Activated naive CD4-positive, alpha-beta T cell treated with anti-CD3 and anti-CD28 coated beads for 36 hours (primary cell): ENCODE measurements at regions of chr3 and their contacts with region 1.

Region 1: GRCh38 chr3:172341482-172342059 is 106.7 kb downstream of the GHSR start:
- DNase-seq: peak; percentile 14
- H3K4me3 Mint-ChIP-seq: no peak overlapping the region
- H3K27ac Mint-ChIP-seq: no peak overlapping the region
- H3K4me1 Mint-ChIP-seq: no peaks in the 10 kb centered on the region
- H3K27me3 Mint-ChIP-seq: no peaks in the 10 kb centered on the region

Region 2: DNA sequence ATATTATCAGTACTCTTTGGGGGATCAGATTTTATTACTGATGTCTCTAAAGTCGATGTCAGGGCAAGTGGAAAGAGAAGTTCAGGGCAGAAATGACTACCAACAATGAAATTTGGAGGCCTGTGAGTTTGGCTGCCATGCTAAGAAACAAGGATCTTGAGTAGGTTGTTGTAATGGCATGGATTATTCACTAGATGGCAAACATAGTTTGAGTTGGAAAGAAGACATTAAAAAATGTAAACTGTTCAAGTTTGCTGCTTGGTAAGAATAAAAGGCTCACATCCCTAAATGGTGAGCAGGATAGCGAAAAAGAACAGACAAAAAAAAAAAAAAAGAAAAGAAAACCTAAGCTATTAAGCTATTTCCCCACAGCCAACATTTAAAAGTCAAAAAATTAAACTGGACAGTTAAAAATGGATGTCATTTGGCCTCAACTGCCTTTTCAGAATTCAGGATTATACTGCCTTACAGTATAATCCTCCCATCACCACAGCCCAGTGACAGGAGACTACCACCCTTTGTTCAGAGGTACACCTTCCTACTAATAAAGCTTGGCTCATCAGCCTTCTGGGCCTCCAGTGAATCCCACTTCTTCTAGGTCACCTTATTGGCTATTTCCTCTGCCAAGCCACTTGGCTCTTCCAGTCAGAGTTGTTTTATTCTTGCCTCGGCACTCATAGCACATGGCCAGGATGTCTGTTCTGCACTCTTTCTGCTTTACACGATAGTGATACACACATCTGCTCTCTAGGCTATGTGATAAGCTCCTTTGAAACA is 695.0 kb before region 1 on chr3:
- CTCF ChIA-PET with region 1: no interaction called
- intact Hi-C with region 1: loop called (anchors 1 kb)
- DNase-seq: no peak
- H3K4me3 Mint-ChIP-seq: no peak overlapping the region
- H3K27ac Mint-ChIP-seq: no peak overlapping the region
- H3K4me1 Mint-ChIP-seq: no peaks in the 10 kb centered on the region
- H3K27me3 Mint-ChIP-seq: no peaks in the 10 kb centered on the region

Region 3: DNA sequence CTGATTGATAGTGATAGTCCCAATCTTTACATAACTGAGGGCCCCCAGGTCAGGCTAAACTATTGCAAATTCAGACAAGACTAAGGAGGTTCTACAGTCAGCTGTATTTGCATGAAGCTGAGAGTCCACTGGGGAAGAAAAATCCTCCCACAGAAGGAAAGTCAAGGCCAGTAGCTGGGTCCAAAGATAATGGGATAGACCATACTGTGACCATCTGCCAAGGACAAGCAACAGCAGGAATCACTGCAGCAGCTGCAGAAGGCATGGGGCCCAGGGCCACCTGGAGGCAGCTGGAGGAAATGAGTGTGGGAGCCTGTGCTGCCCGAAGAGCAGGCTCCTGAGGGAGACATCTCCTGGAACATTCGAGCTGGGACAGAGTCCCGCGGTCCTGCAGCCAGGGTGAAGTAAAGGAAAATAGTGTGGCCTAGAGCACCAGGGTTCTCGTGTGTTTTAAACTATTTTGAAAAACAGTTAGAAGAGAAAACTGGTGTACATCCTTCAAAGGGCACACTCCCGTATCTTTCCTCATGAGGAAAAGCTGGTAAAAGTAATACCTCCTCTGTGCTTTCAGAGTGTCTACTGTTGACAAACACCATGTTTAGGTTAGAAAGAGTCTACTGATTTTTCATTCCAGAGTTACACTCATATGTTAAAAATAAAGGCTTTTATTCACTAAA is 511.6 kb before region 1 on chr3:
- CTCF ChIA-PET with region 1: interaction called, 5 read pairs
- intact Hi-C with region 1: loop called (anchors 2 kb)
- DNase-seq: no peak
- H3K4me3 Mint-ChIP-seq: no peak overlapping the region
- H3K27ac Mint-ChIP-seq: no peak overlapping the region
- H3K4me1 Mint-ChIP-seq: no peaks in the 10 kb centered on the region
- H3K27me3 Mint-ChIP-seq: peaks cover 12% of the 10 kb centered on the region

Region 4: DNA sequence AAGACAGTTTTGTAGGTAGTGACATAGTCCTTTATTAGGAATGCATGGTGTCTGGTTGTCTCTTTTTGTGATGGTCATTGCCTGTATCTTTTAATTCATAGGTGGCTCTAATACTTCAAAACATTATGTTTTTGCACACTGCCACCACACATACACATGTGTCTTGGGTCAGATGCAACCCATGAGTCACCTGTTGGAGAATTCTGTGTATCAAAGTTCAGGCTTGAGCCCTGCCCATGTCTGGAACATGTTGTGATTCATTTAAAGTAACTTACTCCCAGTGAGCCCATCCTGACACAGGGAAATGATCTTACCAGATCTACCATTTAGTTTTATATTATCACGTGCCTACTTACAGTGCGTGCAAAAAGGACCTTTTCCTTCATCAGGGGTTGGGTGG is 36.0 kb before region 1 on chr3:
- CTCF ChIA-PET with region 1: no interaction called
- intact Hi-C with region 1: no loop called
- DNase-seq: no peak
- H3K4me3 Mint-ChIP-seq: no peak overlapping the region
- H3K27ac Mint-ChIP-seq: no peak overlapping the region
- H3K4me1 Mint-ChIP-seq: no peaks in the 10 kb centered on the region
- H3K27me3 Mint-ChIP-seq: no peaks in the 10 kb centered on the region

Region 5: DNA sequence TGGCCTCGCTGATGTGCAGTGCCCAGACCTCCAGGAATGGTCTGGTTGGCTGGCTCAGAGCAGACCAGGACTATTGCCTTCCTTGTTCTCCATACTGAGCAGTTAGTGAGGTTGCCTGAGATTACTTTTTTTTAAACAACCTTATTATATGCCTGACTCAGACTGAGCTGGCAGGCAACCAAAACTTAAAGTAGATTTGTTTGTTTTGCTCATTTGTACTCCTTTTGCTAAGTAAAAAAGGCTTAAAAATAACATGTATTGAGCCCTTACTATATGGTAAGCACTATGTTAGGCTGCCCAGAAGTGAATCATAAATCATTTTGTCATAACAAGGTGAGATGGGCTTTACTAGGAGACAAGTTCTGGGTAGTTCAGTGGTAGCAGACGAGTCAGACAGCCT is 14.3 kb after region 1 on chr3:
- CTCF ChIA-PET with region 1: interaction called, 12 read pairs
- intact Hi-C with region 1: no loop called
- DNase-seq: no peak
- H3K4me3 Mint-ChIP-seq: no peak overlapping the region
- H3K27ac Mint-ChIP-seq: no peak overlapping the region
- H3K4me1 Mint-ChIP-seq: no peaks in the 10 kb centered on the region
- H3K27me3 Mint-ChIP-seq: no peaks in the 10 kb centered on the region

Region 6: GRCh38 chr3:172673210-172673679 is 331.7 kb after region 1 on chr3:
- CTCF ChIA-PET with region 1: interaction called, 15 read pairs
- intact Hi-C with region 1: no loop called
- DNase-seq: peak; percentile 89
- H3K4me3 Mint-ChIP-seq: no peak overlapping the region
- H3K27ac Mint-ChIP-seq: no peak overlapping the region
- H3K4me1 Mint-ChIP-seq: no peaks in the 10 kb centered on the region
- H3K27me3 Mint-ChIP-seq: no peaks in the 10 kb centered on the region